Right ventricle myocardium inferior (tissue), 1 donor: ENCODE measurements at regions of chr6 and their contacts with region 1.

Region 1: DNA sequence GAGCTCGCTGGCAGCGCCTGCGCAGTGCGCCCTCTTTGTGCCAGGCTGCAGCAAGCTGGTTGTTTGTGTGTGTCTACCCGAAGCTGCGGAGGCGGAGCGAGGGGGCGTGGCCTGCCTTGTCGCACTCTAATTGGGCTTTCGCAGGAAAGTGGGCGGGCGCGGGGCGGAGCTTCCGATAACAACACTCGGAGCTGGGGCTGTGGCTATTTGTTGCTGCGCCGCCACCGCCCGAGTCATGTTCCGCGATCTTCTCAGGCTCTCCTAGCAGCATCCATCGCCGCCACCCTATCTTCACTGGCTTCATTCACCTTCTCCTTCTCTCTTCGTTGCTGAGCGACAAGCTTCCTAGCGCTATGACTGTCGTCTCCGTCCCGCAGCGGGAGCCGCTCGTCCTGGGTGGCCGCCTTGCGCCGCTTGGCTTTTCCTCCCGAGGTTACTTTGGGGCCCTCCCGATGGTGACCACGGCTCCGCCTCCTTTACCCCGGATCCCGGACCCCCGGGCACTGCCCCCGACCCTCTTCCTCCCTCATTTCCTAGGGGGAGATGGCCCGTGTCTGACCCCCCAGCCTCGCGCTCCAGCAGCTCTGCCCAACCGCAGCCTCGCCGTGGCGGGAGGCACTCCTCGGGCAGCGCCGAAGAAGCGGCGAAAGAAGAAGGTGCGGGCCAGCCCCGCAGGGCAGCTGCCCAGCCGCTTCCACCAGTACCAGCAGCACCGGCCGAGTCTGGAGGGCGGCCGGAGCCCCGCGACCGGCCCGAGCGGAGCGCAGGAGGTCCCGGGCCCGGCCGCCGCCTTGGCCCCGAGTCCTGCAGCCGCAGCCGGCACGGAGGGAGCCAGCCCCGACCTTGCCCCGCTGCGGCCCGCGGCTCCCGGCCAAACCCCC is at the start of gene PNRC1:
- DNase-seq: peak; percentile 100
- ATAC-seq: peak; percentile 93
- total RNA-seq, gene PNRC1: 139 TPM

Region 2: GRCh38 chr6:88963139-88964090 is 117.4 kb before region 1 on chr6 and contains the start of gene RNGTT:
- intact Hi-C with region 1: loop called (anchors 1 kb)
- DNase-seq: peak; percentile 99
- ATAC-seq: peak; percentile 100
- total RNA-seq, gene RNGTT: 7.0 TPM

Region 3: GRCh38 chr6:89022798-89023197 is 58.0 kb before region 1 on chr6:
- intact Hi-C with region 1: loop called (anchors 5 kb)
- DNase-seq: no peak
- ATAC-seq: no peak

Region 4: GRCh38 chr6:89035252-89036106 is 45.3 kb before region 1 on chr6:
- intact Hi-C with region 1: loop called (anchors 1 kb)
- DNase-seq: peak; percentile 81
- ATAC-seq: peak; percentile 96

Region 5: GRCh38 chr6:89145787-89146646 is 65.2 kb after region 1 on chr6 and contains the start of gene PM20D2:
- intact Hi-C with region 1: loop called (anchors 5 kb)
- DNase-seq: peak; percentile 86
- ATAC-seq: peak; percentile 94
- total RNA-seq, gene PM20D2: 13.3 TPM

Region 6: GRCh38 chr6:89242574-89243330 is 162.0 kb after region 1 on chr6:
- intact Hi-C with region 1: no loop called
- DNase-seq: no peak
- ATAC-seq: no peak

Region 7: GRCh38 chr6:89454301-89454700 is 373.5 kb after region 1 on chr6:
- intact Hi-C with region 1: no loop called
- DNase-seq: no peak
- ATAC-seq: no peak